ENCODE measurements at regions of chr14 and their contacts with region 1.

Region 1: DNA sequence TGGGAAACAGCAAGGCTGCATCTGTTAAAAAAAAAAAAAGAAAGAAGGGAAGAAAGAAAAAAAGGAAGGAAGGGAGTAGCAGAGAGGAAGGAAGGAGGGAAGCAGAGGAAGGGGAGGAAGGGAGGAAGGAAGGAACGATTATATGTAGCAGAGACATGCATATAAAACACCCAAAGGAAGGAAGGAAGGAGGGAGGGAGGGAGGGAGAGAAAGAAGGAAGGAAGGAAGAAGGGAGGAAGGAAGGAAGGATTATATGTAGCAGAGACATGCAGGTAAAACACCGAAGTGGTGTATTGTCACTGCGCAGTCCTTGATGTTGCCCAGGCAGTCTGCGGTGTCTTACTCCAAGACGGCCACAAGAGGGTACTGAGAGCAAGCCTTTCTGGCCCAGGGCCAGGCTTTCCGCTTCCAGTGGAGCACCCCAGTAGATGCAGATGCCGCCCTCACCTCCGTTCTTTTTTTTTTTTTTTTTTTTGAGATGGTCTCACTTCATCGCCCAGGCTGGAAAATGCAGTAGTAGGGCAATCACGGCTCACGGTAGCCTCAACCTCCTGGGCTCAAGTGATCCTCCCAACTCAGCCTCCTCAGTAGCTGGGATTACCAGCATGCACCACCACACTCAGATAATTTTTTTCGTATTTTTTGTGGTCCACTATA is 5.8 kb upstream of the LBHD2 start:
- DNase-seq: peak; percentile 89
- ATAC-seq: peak; percentile 85
- H3K4me3 Mint-ChIP-seq: no peak overlapping the region
- H3K27ac Mint-ChIP-seq: no peak overlapping the region
- H3K4me1 Mint-ChIP-seq: no peaks in the 10 kb centered on the region
- H3K27me3 Mint-ChIP-seq: peaks cover 4% of the 10 kb centered on the region

Region 2: GRCh38 chr14:103057365-103058096 is 20.7 kb before region 1 on chr14 and contains the start of gene CDC42BPB:
- CTCF ChIA-PET with region 1: no interaction called
- POLR2A ChIA-PET with region 1: interaction called, 3 read pairs
- intact Hi-C with region 1: loop called in 1 of 2 experiments (anchors 1 kb)
- DNase-seq: peak; percentile 66
- ATAC-seq: peak; percentile 92
- H3K4me3 Mint-ChIP-seq: peak within 1 kb of the TSS; percentile 66
- H3K27ac Mint-ChIP-seq: no peak within 1 kb of the TSS
- H3K4me1 Mint-ChIP-seq: peaks cover 9% of the 10 kb centered on the region
- H3K27me3 Mint-ChIP-seq: peaks cover 17% of the 10 kb centered on the region
- total RNA-seq, gene CDC42BPB: 4.0 to 4.4 TPM

Region 3: DNA sequence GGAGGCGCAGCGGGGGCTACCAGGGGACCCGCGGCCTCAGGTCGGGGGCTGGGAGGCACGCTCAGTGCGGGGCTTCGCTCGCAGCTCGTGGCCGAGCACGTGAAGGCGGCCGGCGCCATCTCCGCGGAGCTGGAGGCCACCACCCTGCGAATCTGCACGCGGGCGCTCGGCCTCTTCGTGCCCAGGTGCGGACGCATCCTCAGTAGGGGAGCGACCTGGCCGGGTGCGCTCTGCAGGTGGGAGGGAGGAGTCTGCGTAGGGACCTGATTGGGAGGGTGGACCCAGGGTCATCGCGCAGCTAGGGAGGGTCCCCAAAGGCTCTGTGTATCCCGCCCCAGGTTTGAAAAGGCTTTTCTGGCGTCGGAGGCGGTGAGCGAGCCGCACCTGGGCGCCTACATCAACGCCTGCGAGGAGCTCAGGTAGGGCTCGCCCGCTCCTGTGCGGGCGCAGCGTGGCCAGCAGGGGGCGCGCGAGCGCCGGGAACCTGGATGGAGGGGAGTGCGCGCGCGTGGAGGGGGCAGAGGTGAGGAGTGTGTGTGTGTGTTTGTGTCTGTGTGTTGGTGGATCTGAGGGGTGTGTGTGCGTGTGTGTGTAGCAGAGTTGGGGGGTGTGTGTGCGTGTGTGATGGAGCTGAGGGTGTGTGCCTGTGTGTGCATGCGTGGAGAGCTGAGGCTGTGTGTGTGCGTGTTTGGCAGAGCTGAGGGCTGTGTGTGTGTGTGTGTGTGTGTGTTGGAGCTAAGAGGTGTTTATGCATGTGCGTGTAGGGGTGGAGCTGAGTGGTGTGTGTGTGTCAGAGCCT is 26.6 kb after region 1 on chr14:
- CTCF ChIA-PET with region 1: interaction called, 16 read pairs
- POLR2A ChIA-PET with region 1: no interaction called
- intact Hi-C with region 1: loop called in 1 of 2 experiments (anchors 1 kb)
- DNase-seq: peak; percentile 85
- ATAC-seq: peak; percentile 82
- H3K4me3 Mint-ChIP-seq: no peak overlapping the region
- H3K27ac Mint-ChIP-seq: no peak overlapping the region
- H3K4me1 Mint-ChIP-seq: peaks cover 10% of the 10 kb centered on the region
- H3K27me3 Mint-ChIP-seq: peaks cover 27% of the 10 kb centered on the region

Region 4: DNA sequence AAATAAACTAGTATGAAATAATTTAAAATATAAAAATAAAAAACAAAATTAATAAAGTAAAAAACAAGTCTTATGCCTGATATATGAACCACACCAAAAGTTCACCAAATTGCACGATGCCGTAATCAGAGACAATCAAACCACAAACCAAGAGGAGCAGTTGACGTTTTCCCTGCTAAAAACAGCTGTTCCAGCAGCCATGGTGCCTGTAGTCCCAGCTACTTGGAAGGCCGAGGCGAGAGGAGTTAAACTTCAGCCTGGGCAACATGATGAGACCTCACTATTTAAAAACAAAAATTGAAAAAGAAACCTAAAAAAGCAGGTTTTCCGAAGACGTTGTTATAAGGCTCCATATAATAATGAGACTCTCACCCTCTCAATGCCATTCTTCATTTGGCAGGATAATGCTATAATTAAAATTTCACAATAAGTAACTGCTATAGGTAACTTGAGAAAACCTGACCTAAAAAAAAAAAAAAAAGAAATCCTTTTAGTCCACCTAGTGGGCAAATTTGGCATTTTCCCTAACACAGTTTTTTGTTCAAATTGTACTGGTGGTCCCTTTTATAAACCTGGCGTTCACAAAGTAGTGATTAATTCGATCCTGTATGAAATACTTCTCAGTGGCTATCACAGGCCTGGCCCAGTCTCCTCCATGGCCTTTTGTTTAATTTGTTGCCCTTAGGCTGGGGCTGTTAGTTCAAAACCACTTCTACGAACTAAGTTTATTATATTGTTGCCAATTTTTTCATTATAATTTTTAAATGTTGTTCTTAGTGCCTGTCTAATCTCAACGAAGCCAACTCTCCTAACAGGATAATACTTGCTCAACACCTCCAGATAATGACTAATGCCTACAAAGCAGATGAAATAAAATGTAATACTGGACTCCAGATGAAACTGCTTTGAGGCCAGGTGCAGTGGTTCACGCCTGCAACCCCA is 107.1 kb after region 1 on chr14:
- CTCF ChIA-PET with region 1: no interaction called
- POLR2A ChIA-PET with region 1: no interaction called
- intact Hi-C with region 1: loop called (anchors 1 to 5 kb)
- DNase-seq: no peak
- ATAC-seq: no peak
- H3K4me3 Mint-ChIP-seq: no peak overlapping the region
- H3K27ac Mint-ChIP-seq: no peak overlapping the region
- H3K4me1 Mint-ChIP-seq: peaks cover 3% of the 10 kb centered on the region
- H3K27me3 Mint-ChIP-seq: peaks cover 40% of the 10 kb centered on the region

Region 5: DNA sequence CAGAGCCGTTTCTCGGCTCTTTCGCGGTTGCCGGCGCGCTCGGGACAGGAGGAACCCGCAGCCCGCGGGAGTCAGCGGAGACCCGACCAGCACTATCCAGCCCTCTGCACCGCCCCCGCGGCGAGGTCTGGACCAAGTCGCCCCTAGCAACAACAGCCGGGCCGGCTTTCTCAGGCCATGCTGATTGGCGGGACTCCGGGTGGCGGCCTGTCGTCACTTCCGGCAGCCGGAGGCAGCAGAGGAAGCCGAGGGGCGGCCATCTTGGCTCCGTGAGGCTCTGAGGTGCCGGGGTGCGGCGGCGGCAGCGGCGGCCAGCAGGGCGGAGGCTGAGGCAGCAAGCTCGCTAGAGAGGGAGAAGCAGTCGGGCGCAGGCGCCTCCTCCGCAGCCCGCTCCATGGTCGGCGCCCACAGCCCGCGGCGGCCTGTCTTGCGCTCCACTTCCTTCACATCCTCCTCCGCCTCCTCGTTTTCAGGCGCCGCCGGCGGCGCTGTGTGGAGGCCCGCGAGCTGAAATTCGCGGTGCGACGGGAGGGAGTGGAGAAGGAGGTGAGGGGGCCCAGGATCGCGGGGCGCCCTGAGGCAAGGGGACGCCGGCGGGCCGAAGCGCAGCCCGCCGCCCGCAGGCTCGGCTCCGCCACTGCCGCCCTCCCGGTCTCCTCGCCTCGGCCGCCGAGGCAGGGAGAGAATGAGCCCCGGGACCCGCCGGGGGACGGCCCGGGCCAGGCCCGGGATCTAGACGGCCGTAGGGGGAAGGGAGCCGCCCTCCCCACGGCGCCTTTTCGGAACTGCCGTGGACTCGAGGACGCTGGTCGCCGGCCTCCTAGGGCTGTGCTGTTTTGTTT is 307.2 kb after region 1 on chr14 and contains the start of gene MARK3:
- CTCF ChIA-PET with region 1: no interaction called
- POLR2A ChIA-PET with region 1: no interaction called
- intact Hi-C with region 1: loop called in 1 of 2 experiments (anchors 10 kb)
- DNase-seq: peak; percentile 98
- ATAC-seq: peak; percentile 93
- H3K4me3 Mint-ChIP-seq: peak within 1 kb of the TSS; percentile 99
- H3K27ac Mint-ChIP-seq: peak within 1 kb of the TSS; percentile 98
- H3K4me1 Mint-ChIP-seq: peaks cover 33% of the 10 kb centered on the region
- H3K27me3 Mint-ChIP-seq: no peaks in the 10 kb centered on the region
- total RNA-seq, gene MARK3: 57.3 to 64.9 TPM